CD8-positive, alpha-beta T cell (primary cell): ENCODE measurements at regions of chr14 and their contacts with region 1.

Region 1: GRCh38 chr14:36591482-36591881 is 9.1 kb upstream of the NKX2-8 start:
- DNase-seq: no peak
- ATAC-seq: no peak
- H3K4me3 ChIP-seq: no peak overlapping the region
- H3K4me3 Mint-ChIP-seq: no peak overlapping the region
- H3K27ac ChIP-seq: no peak overlapping the region
- H3K27ac Mint-ChIP-seq: no peak overlapping the region
- H3K4me1 ChIP-seq: no peaks in the 10 kb centered on the region
- H3K4me1 Mint-ChIP-seq: no peaks in the 10 kb centered on the region
- H3K27me3 ChIP-seq: peaks cover 0 to 2% of the 10 kb centered on the region in 2 experiments
- H3K27me3 Mint-ChIP-seq: peaks cover 45% of the 10 kb centered on the region
- CTCF ChIP-seq: no peak

Region 2: DNA sequence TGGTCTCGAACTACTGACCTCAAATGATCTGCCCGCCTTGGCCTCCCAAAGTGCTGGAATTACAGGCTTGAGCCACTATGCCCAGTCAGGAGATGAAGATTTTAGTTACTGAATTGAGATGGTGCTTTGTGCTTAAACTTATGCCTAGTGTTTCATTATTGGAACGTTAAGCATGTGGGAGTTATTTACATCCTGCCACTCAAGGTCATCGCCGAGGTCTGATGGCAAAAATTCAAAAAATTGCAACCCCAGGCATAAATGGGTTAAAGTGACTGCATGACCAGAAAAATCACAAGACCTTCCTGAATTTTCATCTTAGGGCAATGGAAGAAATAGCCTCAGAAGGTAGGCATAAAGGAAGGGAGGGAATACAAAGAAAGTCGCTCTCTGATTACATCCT is 25.3 kb after region 1 on chr14:
- CTCF ChIA-PET with region 1: no interaction called
- POLR2A ChIA-PET with region 1: no interaction called
- intact Hi-C with region 1: loop called in 1 of 2 experiments (anchors 1 kb)
- DNase-seq: no peak
- ATAC-seq: no peak
- H3K4me3 ChIP-seq: no peak overlapping the region
- H3K4me3 Mint-ChIP-seq: no peak overlapping the region
- H3K27ac ChIP-seq: no peak overlapping the region
- H3K27ac Mint-ChIP-seq: no peak overlapping the region
- H3K4me1 ChIP-seq: no peaks in the 10 kb centered on the region
- H3K4me1 Mint-ChIP-seq: no peaks in the 10 kb centered on the region
- H3K27me3 ChIP-seq: no peaks in the 10 kb centered on the region
- H3K27me3 Mint-ChIP-seq: no peaks in the 10 kb centered on the region
- CTCF ChIP-seq: no peak